ENCODE measurements at regions of chr19 and their contacts with region 1.

Region 1: GRCh38 chr19:52748336-52748950 is 13.6 kb upstream of the ZNF611 start:
- DNase-seq: no peak
- H3K4me3 ChIP-seq: no peak overlapping the region
- H3K27ac ChIP-seq: no peak overlapping the region
- H3K4me1 ChIP-seq: peaks cover 0 to 8% (median 0%) of the 10 kb centered on the region in 6 donors
- H3K27me3 ChIP-seq: no peaks in the 10 kb centered on the region
- CTCF ChIP-seq: peak; percentile 13 to 77 (median 48)
- POLR2A ChIP-seq: no peak

Region 2: DNA sequence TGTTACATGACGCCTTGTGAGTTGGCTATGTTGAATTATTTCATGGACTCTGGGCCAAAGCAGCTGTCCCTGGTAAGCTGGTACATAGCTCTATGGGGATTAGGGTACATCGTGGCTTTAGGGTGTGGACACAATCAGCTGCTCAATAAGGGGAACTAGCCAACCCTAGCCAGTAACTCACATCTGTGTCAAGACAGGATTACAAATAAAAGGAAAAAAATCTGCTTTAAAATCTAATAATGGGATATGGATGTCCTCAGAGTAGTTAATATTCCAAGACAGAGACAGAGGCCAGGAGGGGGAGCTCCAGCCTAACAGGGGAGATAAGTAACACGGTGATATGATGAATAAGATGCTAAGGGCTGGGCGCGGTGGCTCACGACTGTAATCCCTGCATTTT is 500.2 kb before region 1 on chr19:
- intact Hi-C with region 1: loop called (anchors 10 kb)
- DNase-seq: peak; percentile 77
- H3K4me3 ChIP-seq: no peak overlapping the region
- H3K27ac ChIP-seq: no peak overlapping the region
- H3K4me1 ChIP-seq: no peaks in the 10 kb centered on the region
- H3K27me3 ChIP-seq: no peaks in the 10 kb centered on the region
- CTCF ChIP-seq: peak in 8 of 11 experiments; percentile 9 to 54 (median 42)
- POLR2A ChIP-seq: no peak

Region 3: GRCh38 chr19:52690369-52691214 is 57.9 kb before region 1 on chr19:
- intact Hi-C with region 1: no loop called
- DNase-seq: peak; percentile 98
- H3K4me3 ChIP-seq: peak overlapping the region; percentile 39 to 72 (median 64)
- H3K27ac ChIP-seq: peak overlapping the region; percentile 83 to 94 (median 90)
- H3K4me1 ChIP-seq: peaks cover 0 to 45% (median 24%) of the 10 kb centered on the region in 6 donors
- H3K27me3 ChIP-seq: no peaks in the 10 kb centered on the region
- CTCF ChIP-seq: peak in 7 of 11 experiments; percentile 20 to 62 (median 46)
- POLR2A ChIP-seq: peak in 1 of 3 donors; percentile 76

Region 4: DNA sequence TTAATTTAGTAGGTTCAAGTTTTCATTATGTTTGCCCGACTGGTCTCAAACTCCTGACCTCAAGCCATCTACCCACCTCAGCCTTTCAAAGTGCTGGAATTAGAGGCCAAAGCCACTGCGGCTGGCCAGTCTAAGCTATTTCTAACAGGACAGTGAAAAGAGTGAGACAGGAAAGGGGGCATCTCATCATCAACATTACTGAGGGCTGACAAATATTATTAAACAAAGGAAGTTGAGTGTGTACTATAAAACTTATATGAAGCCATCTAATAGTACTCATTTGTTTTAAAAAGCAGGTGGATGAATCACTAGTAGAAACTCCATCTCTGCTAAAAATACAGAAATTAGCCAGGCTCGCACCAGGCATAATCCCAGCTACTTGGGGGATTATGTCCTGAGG is 37.9 kb before region 1 on chr19:
- intact Hi-C with region 1: no loop called
- DNase-seq: no peak
- H3K4me3 ChIP-seq: no peak overlapping the region
- H3K27ac ChIP-seq: no peak overlapping the region
- H3K4me1 ChIP-seq: no peaks in the 10 kb centered on the region
- H3K27me3 ChIP-seq: no peaks in the 10 kb centered on the region
- CTCF ChIP-seq: no peak
- POLR2A ChIP-seq: no peak